ENCODE measurements at regions of chr3 and their contacts with region 1.

Region 1: DNA sequence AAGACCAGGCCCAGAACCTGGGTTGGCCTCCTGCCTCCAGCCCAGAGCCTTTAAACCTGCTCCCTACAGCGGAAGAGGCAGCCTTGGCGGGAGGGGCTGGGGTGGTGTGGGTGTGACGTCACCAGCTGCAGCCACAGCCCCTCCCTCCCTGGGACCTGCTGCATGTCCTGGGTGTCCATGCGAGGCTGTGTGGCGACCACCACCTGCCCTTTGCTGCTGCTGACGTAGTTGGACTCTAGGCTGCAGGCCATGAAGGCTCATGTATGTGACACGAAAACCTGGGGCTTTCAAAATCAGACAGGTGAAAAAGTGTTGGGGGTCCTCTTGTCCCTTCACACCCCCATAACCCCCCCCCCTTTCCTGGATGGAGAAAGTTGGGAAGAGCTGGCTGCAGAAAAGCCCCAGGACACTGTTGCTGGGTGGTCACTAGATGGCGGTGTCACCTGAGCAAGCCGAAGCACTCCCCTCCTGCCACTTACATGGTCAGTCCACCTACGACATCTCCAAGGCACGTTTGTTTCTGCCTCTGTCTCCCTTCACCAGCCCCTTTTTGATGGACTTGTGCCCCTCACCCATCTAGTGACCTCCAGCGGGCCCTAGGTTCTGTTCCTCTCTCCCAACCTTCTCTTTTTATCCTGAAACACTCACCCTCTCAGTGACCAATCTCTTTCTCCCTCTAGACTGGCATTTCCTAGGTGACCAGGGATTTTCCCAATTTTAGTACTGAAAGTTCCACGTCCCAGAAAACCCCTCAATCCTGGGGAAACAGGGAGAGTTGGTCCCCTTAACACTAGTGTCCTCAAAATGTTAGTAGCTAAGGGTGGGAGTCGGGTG is 35.2 kb downstream of the SLC6A20 start:
- DNase-seq: peak; percentile 76
- ATAC-seq: peak; percentile 99
- H3K4me3 ChIP-seq: no peak overlapping the region
- H3K27ac ChIP-seq: no peak overlapping the region
- H3K4me1 ChIP-seq: no peaks in the 10 kb centered on the region
- H3K27me3 ChIP-seq: peaks cover 12% of the 10 kb centered on the region
- CTCF ChIP-seq: peak; percentile 90
- POLR2A ChIP-seq: no peak
- RAD21 ChIP-seq: peak; percentile 93

Region 2: DNA sequence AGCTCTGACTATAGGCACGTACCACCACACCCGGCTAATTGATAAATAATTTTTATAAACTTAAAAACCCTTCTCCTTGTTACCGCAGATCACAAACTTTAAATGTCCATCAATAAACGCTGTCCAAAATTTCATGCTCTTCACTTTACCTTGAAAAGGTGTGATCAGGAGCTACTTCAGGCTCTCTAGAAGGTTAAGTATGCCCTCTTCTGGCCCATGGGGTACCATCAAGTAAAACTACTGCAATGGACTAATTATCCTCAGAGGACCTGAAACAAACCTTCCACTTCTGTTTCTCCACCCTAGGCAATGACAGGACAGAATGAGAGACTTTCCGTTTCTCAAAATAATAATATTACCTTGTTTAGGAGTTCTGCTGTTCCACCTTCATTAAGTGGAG is 71.6 kb after region 1 on chr3:
- CTCF ChIA-PET with region 1: interaction called, 4 read pairs
- POLR2A ChIA-PET with region 1: no interaction called
- dilution Hi-C with region 1: no loop called
- in situ Hi-C with region 1: no loop called
- intact Hi-C with region 1: loop called (anchors 2 kb)
- DNase-seq: peak; percentile 16
- ATAC-seq: no peak
- H3K4me3 ChIP-seq: no peak overlapping the region
- H3K27ac ChIP-seq: no peak overlapping the region
- H3K4me1 ChIP-seq: peaks cover 2% of the 10 kb centered on the region; the same call in 1 of the 2 replicates
- H3K27me3 ChIP-seq: no peaks in the 10 kb centered on the region
- CTCF ChIP-seq: peak; percentile 40; the same call in 1 of the 2 replicates
- POLR2A ChIP-seq: no peak
- RAD21 ChIP-seq: peak; percentile 46

Region 3: DNA sequence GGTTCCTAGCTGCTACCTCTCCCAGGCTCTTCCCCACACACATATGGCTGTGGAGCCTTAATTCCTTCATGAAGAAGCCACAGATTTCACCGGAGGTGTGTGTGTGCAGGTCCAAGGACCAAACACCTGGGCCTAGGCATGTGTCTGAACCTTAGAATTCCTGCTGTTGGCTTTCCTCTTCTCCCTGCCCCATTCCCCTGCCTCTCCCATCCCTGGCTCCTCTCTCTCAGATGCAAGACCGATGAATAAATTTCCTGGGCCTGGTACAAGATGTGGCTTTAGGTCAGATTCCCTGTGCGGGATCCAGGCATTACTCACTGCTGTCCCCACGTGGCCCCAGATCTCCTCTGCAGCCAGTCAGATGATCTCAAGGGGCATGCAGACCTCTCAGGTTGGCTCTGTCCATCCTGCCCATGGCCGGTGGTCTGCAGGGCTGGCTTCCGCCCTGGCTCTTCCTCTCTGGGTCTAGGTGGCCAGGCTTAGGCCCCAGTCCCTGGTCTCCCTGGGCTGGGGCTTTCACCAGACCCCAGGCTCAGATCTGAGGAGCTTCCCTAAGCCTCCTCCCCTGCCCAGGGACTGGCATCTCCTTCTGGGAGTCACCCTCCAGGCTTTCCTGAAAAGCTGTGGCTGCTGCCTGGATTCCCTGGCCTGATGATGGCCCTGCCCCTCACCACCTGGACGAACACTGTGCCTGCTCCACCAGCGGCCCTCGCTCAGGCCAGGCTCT is 145.7 kb after region 1 on chr3:
- CTCF ChIA-PET with region 1: interaction called, 3 read pairs
- POLR2A ChIA-PET with region 1: no interaction called
- dilution Hi-C with region 1: no loop called
- in situ Hi-C with region 1: no loop called
- intact Hi-C with region 1: loop called (anchors 1 kb)
- DNase-seq: peak; percentile 84
- ATAC-seq: peak; percentile 84
- H3K4me3 ChIP-seq: no peak overlapping the region
- H3K27ac ChIP-seq: no peak overlapping the region
- H3K4me1 ChIP-seq: peaks cover 19% of the 10 kb centered on the region
- H3K27me3 ChIP-seq: no peaks in the 10 kb centered on the region
- CTCF ChIP-seq: peak; percentile 63
- POLR2A ChIP-seq: no peak
- RAD21 ChIP-seq: peak; percentile 72

Region 4: DNA sequence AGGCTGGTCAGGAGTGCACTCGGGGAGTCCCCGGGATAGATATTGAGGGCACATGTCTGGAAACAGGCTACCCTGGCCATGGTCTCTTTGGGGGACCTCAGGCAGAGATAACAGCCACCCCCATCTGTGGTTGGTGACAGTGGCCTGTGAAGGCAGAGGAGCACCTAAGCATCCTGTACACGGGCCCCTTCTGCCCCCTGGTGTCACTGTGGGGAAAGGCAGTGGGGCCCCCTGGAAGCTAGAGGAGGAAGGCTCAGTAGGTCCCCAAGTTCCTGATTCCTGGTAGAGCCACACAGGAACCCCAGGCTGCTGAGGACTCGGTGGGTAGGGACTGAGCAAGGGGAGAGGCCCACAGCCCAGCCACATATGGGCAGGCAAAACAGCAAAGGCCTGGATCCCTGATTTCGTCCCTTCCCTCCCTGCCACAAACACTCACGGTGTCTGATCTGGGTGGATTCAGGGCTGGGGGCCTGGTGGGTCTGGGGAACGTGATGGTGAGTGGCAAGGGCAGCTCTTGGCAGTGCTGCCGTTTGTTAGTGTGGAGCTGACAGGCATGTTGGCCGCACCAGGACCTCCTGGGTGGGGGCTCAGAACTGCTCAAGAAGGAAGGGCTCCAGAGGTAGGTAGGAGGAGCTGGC is 168.1 kb after region 1 on chr3:
- CTCF ChIA-PET with region 1: interaction called, 5 read pairs
- POLR2A ChIA-PET with region 1: interaction called, 3 read pairs
- dilution Hi-C with region 1: no loop called
- in situ Hi-C with region 1: loop called (anchors 5 kb)
- intact Hi-C with region 1: loop called (anchors 1 kb)
- DNase-seq: peak; percentile 26
- ATAC-seq: peak; percentile 93
- H3K4me3 ChIP-seq: no peak overlapping the region
- H3K27ac ChIP-seq: no peak overlapping the region
- H3K4me1 ChIP-seq: peaks cover 8% of the 10 kb centered on the region
- H3K27me3 ChIP-seq: no peaks in the 10 kb centered on the region
- CTCF ChIP-seq: peak; percentile 79
- POLR2A ChIP-seq: no peak
- RAD21 ChIP-seq: peak; percentile 93

Region 5: GRCh38 chr3:46378426-46378942 is 617.4 kb after region 1 on chr3:
- CTCF ChIA-PET with region 1: no interaction called
- POLR2A ChIA-PET with region 1: no interaction called
- dilution Hi-C with region 1: no loop called
- in situ Hi-C with region 1: no loop called
- intact Hi-C with region 1: loop called (anchors 5 kb)
- DNase-seq: peak; percentile 40
- ATAC-seq: peak; percentile 72
- H3K4me3 ChIP-seq: no peak overlapping the region
- H3K27ac ChIP-seq: no peak overlapping the region
- H3K4me1 ChIP-seq: no peaks in the 10 kb centered on the region
- H3K27me3 ChIP-seq: peaks cover 48% of the 10 kb centered on the region
- CTCF ChIP-seq: peak; percentile 66
- POLR2A ChIP-seq: no peak
- RAD21 ChIP-seq: peak; percentile 77